ENCODE measurements at regions of chr13 and their contacts with region 1.

Region 1: GRCh38 chr13:19726611-19727010 is 56.1 kb downstream of the PSPC1 start:
- DNase-seq: no peak
- H3K4me3 ChIP-seq: no peak overlapping the region
- H3K4me3 Mint-ChIP-seq: no peak overlapping the region
- H3K27ac ChIP-seq: no peak overlapping the region
- H3K27ac Mint-ChIP-seq: peak overlapping the region in 1 of 8 donors; percentile 4
- H3K4me1 ChIP-seq: no peaks in the 10 kb centered on the region
- H3K4me1 Mint-ChIP-seq: peaks cover 46 to 74% (median 57%) of the 10 kb centered on the region in 3 donors
- H3K27me3 ChIP-seq: no peaks in the 10 kb centered on the region
- H3K27me3 Mint-ChIP-seq: no peaks in the 10 kb centered on the region

Region 2: DNA sequence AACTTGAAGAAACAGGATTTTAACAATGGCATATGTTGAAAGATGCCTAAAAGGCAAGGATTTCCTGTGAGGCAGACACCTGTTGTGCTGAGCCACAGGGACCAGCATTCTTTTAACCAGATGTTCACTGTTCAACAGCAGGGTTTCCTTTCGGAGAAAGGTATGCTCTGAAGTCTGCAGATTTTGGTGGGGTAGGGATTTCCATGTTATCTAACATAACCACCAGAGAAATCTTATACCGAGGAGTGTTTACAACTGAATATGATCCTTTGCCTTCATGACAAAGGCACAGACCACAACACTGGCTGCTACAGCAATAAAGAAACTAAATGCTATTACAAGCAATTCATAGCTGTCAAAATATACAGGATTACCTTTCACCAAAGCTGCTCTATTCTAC is 45.1 kb before region 1 on chr13:
- CTCF ChIA-PET with region 1: no interaction called
- POLR2A ChIA-PET with region 1: interaction called, 10 read pairs
- DNase-seq: peak in 1 of 5 donors; percentile 4
- H3K4me3 ChIP-seq: no peak overlapping the region
- H3K4me3 Mint-ChIP-seq: no peak overlapping the region
- H3K27ac ChIP-seq: no peak overlapping the region
- H3K27ac Mint-ChIP-seq: peak overlapping the region in 5 of 8 donors; percentile 24 to 66 (median 54)
- H3K4me1 ChIP-seq: peaks cover 12% of the 10 kb centered on the region
- H3K4me1 Mint-ChIP-seq: peaks cover 28 to 44% (median 44%) of the 10 kb centered on the region in 3 donors
- H3K27me3 ChIP-seq: no peaks in the 10 kb centered on the region
- H3K27me3 Mint-ChIP-seq: no peaks in the 10 kb centered on the region

Measured in CD8-positive, alpha-beta memory T cell (primary cell).